HepG2 (cell line): ENCODE measurements at regions of chr2 and their contacts with region 1.

Region 1: GRCh38 chr2:24046930-24047702 is at the start of gene WDCP:
- DNase-seq: peak; percentile 99
- ATAC-seq: peak; percentile 93
- H3K4me3 ChIP-seq: peak within 1 kb of the TSS; percentile 84 to 93 (median 88)
- H3K27ac ChIP-seq: peak within 1 kb of the TSS; percentile 90
- H3K4me1 ChIP-seq: peaks cover 59% of the 10 kb centered on the region
- H3K27me3 ChIP-seq: no peaks in the 10 kb centered on the region; a peak in 2 of 5 replicates
- CTCF ChIP-seq: 0 out of 2 replicates have a peak, but pooled peaks have one; percentile 10
- EP300 ChIP-seq: no peak
- POLR2A ChIP-seq: peak; percentile 93 to 97
- RAD21 ChIP-seq: no peak
- total RNA-seq, gene WDCP: 22.6 and 39.4 TPM in 2 replicates

Region 2: DNA sequence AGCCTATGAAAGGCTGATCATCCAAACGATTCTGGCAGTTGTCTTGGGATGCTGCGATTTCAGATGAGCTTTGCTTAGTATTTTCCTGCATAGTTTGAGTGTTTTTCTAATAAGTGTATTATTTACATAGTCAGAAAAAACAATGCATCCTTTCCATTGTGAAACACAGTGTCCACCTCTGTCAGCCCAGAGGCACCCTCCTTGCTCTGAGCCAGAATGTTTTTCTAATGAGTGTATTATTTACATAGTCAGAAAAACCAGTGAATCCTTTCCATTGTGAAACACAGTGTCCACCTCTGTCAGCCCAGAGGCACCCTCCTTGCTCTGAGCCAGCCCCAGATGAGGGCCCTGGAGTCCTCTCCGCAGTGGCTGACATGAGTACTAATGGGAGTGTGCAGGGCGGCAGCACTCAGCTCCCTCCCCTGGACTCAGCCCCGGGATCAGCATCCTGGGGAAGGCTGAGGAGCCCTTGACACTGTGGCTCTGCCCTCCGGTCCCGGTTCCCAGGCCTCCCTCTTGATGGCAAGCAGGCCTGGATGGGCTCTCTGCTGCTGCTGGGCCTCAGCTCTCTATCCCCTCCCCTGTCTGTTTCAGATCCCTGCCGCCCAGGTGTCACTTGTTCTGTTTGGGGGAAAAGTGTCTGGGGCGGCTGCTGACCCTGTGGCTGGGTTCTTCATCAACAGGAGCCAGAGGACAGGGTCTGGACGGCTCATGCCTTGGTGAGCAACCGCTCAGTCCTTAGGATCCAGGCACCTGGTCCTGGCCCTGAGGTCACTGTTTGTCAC is 31.4 kb before region 1 on chr2:
- CTCF ChIA-PET with region 1: no interaction called
- POLR2A ChIA-PET with region 1: interaction called, 91 read pairs
- in situ Hi-C with region 1: no loop called
- intact Hi-C with region 1: loop called (anchors 2 kb)
- DNase-seq: peak; percentile 98
- ATAC-seq: peak; percentile 95
- H3K4me3 ChIP-seq: peak overlapping the region; percentile 22 to 70 (median 27); a peak in 5 of 6 replicates
- H3K27ac ChIP-seq: peak overlapping the region; percentile 74
- H3K4me1 ChIP-seq: peaks cover 41% of the 10 kb centered on the region
- H3K27me3 ChIP-seq: no peaks in the 10 kb centered on the region
- CTCF ChIP-seq: peak; percentile 46
- EP300 ChIP-seq: peak; percentile 25 to 81; a peak in 3 of 4 replicates
- POLR2A ChIP-seq: peak; percentile 36 to 78; a peak in 2 of 4 replicates
- RAD21 ChIP-seq: peak; percentile 38

Region 3: DNA sequence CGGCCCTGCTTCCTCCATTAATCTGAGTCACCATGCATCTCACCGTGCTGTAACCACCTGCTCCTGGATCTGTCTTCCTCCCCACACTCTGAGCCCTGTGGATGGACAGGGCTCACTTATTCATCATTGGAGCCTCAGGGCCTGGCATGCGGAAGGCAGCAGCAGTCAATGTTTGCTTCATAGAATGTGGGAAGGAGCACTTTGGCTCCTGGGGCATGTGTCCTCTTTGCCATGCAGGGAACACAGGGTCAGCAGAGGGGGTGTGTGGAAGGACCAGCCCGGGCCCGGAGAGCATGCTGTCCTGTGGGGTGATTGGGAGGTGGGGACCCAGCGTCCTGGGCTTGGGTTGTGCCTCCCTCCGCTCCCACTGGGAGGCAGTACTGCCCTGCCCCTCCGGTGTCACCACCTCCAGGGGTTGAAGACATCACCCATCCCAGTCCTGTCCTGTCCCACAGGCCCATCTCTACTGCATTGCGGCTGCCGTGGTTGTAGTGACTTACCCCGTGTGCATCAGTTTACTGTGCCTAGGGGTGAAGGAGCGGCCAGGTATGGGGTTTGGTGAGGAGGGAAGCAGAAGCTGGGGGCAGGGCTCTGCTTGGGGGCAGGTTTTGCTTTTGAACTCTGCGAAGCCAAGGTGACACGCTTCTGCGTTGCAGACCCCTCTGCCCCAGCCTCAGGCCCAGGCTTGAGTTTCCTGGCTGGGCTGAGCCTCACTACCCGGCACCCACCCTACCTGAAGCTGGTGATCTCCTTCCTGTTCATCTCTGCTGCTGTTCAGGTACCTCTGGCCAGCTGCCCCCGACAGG is 25.7 kb before region 1 on chr2:
- CTCF ChIA-PET with region 1: no interaction called
- POLR2A ChIA-PET with region 1: interaction called, 91 read pairs
- in situ Hi-C with region 1: no loop called
- intact Hi-C with region 1: loop called (anchors 1 kb)
- DNase-seq: peak; percentile 61
- ATAC-seq: peak; percentile 84
- H3K4me3 ChIP-seq: no peak overlapping the region
- H3K27ac ChIP-seq: peak overlapping the region; percentile 41
- H3K4me1 ChIP-seq: peaks cover 43% of the 10 kb centered on the region
- H3K27me3 ChIP-seq: no peaks in the 10 kb centered on the region
- CTCF ChIP-seq: peak; percentile 95
- EP300 ChIP-seq: no peak
- POLR2A ChIP-seq: no peak
- RAD21 ChIP-seq: peak; percentile 97

Region 4: GRCh38 chr2:24058564-24059271 is 11.6 kb after region 1 on chr2:
- CTCF ChIA-PET with region 1: no interaction called
- POLR2A ChIA-PET with region 1: interaction called, 6 read pairs
- in situ Hi-C with region 1: no loop called
- intact Hi-C with region 1: loop called (anchors 1 kb)
- DNase-seq: no peak
- ATAC-seq: no peak
- H3K4me3 ChIP-seq: no peak overlapping the region
- H3K27ac ChIP-seq: no peak overlapping the region
- H3K4me1 ChIP-seq: peaks cover 7% of the 10 kb centered on the region
- H3K27me3 ChIP-seq: no peaks in the 10 kb centered on the region
- CTCF ChIP-seq: no peak
- EP300 ChIP-seq: no peak
- POLR2A ChIP-seq: no peak
- RAD21 ChIP-seq: no peak

Region 5: GRCh38 chr2:24065341-24065740 is 18.2 kb after region 1 on chr2:
- CTCF ChIA-PET with region 1: no interaction called
- POLR2A ChIA-PET with region 1: interaction called, 10 read pairs
- in situ Hi-C with region 1: no loop called
- intact Hi-C with region 1: loop called (anchors 1 kb)
- DNase-seq: no peak
- ATAC-seq: no peak
- H3K4me3 ChIP-seq: no peak overlapping the region
- H3K27ac ChIP-seq: no peak overlapping the region
- H3K4me1 ChIP-seq: no peaks in the 10 kb centered on the region
- H3K27me3 ChIP-seq: no peaks in the 10 kb centered on the region
- CTCF ChIP-seq: no peak
- EP300 ChIP-seq: no peak
- POLR2A ChIP-seq: no peak
- RAD21 ChIP-seq: no peak

Region 6: DNA sequence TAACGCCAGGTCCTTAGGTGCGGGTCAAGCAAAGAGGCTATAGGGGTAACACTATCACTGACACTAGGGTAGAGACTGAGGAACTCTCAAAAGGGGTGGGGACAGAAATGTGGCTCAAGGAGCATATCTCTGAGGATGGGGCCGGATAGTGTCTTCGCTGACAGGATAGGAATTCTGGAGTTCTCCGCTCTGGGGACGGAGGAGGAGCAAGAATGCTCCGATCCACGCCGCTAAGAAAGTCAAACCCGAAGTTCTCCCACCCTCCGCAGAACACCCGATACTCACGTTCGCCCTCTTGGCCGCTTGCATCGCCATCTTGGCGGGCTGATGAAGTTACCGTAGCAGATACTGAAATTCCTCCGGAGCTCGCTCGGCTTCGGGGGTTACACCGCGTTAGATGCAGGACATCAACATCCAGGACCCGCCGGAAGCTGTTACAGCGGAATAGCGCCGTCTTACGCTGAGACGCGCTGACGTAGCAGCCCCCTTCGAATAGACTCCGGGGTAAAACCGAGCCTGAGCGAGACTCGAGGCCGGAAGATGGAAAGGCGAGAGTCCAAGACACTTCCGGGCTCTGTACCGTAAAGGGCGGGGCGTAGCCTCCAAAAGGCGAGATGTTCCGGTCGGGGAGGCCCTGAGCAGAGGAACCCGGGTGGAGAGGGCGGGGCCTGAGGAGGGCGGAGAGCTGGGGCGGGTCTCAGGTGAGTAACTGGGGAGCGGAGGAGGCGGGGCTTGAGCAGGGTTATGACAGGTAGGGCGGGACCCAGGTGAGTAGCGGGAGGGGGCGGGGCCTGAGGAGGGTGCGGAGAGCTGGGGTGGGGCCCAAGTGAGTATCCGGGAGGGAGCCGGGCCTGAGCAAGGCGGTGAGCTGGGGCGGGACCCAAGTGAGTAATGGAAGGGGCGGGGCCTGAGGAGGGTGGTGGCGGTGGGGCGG is 29.1 kb after region 1 on chr2 and contains the start of gene SF3B6:
- CTCF ChIA-PET with region 1: no interaction called
- POLR2A ChIA-PET with region 1: interaction called, 66 read pairs
- in situ Hi-C with region 1: no loop called
- intact Hi-C with region 1: loop called (anchors 1 kb)
- DNase-seq: peak; percentile 99
- ATAC-seq: peak; percentile 95
- H3K4me3 ChIP-seq: peak within 1 kb of the TSS; percentile 76 to 100 (median 94)
- H3K27ac ChIP-seq: peak within 1 kb of the TSS; percentile 59
- H3K4me1 ChIP-seq: peaks cover 15% of the 10 kb centered on the region
- H3K27me3 ChIP-seq: no peaks in the 10 kb centered on the region; a peak in 1 of 5 replicates
- CTCF ChIP-seq: peak; percentile 52
- EP300 ChIP-seq: peak; percentile 17 to 78; a peak in 2 of 4 replicates
- POLR2A ChIP-seq: peak; percentile 80 to 91
- RAD21 ChIP-seq: peak; percentile 55
- total RNA-seq, gene SF3B6: 182 and 254 TPM in 2 replicates